CD8-positive, alpha-beta T cell (primary cell): ENCODE measurements at regions of chr4 and their contacts with region 1.

Region 1: DNA sequence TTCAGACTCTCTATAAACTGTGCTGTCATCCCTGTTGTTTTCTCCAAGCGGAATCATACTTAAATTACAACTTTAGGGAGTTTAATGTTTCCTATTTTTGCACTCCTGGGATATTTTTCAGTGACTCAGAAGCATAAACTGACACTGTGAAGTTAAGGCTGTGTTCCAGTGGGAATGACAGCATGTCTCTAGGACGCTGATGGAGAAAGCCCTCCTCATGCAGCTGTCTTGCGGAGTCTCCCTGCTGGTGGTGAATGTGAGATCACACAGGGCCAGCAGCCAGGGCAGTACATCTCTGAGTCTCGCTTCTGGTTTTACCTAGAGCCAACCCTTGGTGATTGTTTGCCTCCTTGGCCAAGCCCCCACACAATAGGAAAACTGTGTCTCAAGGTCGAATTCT is 53.3 kb downstream of the NFKB1 start:
- DNase-seq: no peak
- ATAC-seq: no peak
- H3K4me3 ChIP-seq: no peak overlapping the region
- H3K4me3 Mint-ChIP-seq: no peak overlapping the region
- H3K27ac ChIP-seq: no peak overlapping the region
- H3K27ac Mint-ChIP-seq: no peak overlapping the region
- H3K4me1 ChIP-seq: peaks cover 68% of the 10 kb centered on the region
- H3K4me1 Mint-ChIP-seq: peaks cover 61% of the 10 kb centered on the region
- H3K27me3 ChIP-seq: no peaks in the 10 kb centered on the region
- H3K27me3 Mint-ChIP-seq: no peaks in the 10 kb centered on the region
- CTCF ChIP-seq: no peak

Region 2: DNA sequence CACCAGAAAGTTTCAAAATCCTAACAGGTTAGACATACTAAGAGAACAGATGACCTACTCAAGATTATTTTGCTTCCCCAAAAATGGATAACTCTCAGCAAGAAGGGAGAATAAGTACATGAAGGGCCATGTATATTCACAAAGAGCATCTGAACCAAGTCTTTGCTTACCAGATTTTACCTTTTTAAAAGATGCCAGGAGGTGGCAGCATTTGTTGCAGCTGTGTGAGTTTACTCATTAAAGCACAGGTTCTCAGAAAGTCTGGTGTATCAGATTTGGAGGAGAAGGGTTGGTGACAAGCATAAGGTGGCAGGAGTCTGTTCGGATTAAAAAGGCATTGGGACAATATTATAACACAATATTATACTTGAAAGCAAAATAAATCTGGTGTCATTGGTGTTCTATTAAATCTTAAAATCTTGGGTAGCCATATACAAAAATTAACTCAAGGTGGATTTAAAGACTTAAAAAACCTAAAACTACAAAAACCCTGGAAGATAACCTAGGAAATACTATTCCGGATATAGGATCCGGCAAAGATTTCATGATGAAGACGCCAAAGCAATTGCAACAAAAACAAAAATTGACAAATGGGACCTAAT is 104.6 kb before region 1 on chr4:
- CTCF ChIA-PET with region 1: no interaction called
- POLR2A ChIA-PET with region 1: no interaction called
- intact Hi-C with region 1: loop called in 1 of 2 experiments (anchors 5 kb)
- DNase-seq: peak; percentile 21 to 82 (median 48)
- ATAC-seq: peak; percentile 89
- H3K4me3 ChIP-seq: no peak overlapping the region
- H3K4me3 Mint-ChIP-seq: no peak overlapping the region
- H3K27ac ChIP-seq: no peak overlapping the region
- H3K27ac Mint-ChIP-seq: no peak overlapping the region
- H3K4me1 ChIP-seq: no peaks in the 10 kb centered on the region
- H3K4me1 Mint-ChIP-seq: peaks cover 10% of the 10 kb centered on the region
- H3K27me3 ChIP-seq: no peaks in the 10 kb centered on the region
- H3K27me3 Mint-ChIP-seq: no peaks in the 10 kb centered on the region
- CTCF ChIP-seq: peak; percentile 83

Region 3: DNA sequence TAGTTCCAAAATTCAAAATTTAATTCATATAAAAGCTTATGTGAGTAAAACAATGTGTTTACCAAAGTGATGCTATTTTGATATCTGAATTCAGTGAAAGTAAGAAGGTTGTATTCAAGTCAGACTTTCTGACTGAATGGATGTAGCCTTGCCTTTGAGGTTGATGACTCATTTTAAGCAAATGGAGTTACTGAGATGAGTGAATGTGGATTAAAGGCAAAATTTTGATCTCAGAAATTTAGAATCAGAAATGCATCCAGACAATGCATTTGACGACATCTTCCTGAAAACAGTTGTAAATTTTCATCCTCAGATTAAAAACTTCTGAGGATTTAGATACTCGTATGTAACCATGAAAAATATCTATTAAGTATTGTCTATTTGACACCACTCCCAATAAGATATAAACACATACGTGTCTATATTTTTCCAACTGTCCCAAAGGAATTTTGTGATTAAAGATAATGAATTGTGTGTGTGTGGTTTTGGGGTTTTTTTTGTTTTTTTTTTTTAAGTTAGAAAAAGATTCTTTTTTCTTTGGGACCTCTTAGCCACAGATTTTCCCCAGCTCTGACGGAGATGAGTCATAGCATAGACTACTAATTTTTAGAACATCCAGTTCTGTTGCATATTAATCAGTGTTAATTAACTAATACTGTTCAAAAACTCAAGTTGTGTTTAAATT is 18.9 kb before region 1 on chr4:
- CTCF ChIA-PET with region 1: no interaction called
- POLR2A ChIA-PET with region 1: no interaction called
- intact Hi-C with region 1: loop called in 1 of 2 experiments (anchors 2 kb)
- DNase-seq: peak in 1 of 9 experiments; percentile 55
- ATAC-seq: peak; percentile 77
- H3K4me3 ChIP-seq: no peak overlapping the region
- H3K4me3 Mint-ChIP-seq: no peak overlapping the region
- H3K27ac ChIP-seq: no peak overlapping the region
- H3K27ac Mint-ChIP-seq: no peak overlapping the region
- H3K4me1 ChIP-seq: peaks cover 42% of the 10 kb centered on the region
- H3K4me1 Mint-ChIP-seq: peaks cover 55% of the 10 kb centered on the region
- H3K27me3 ChIP-seq: no peaks in the 10 kb centered on the region
- H3K27me3 Mint-ChIP-seq: no peaks in the 10 kb centered on the region
- CTCF ChIP-seq: no peak

Region 4: GRCh38 chr4:102543030-102543928 is 11.2 kb before region 1 on chr4:
- CTCF ChIA-PET with region 1: interaction called, 5 read pairs
- POLR2A ChIA-PET with region 1: interaction called, 4 read pairs
- intact Hi-C with region 1: loop called in 1 of 2 experiments (anchors 1 kb)
- DNase-seq: no peak
- ATAC-seq: no peak
- H3K4me3 ChIP-seq: no peak overlapping the region
- H3K4me3 Mint-ChIP-seq: no peak overlapping the region
- H3K27ac ChIP-seq: no peak overlapping the region
- H3K27ac Mint-ChIP-seq: no peak overlapping the region
- H3K4me1 ChIP-seq: peaks cover 8% of the 10 kb centered on the region
- H3K4me1 Mint-ChIP-seq: peaks cover 43% of the 10 kb centered on the region
- H3K27me3 ChIP-seq: no peaks in the 10 kb centered on the region
- H3K27me3 Mint-ChIP-seq: no peaks in the 10 kb centered on the region
- CTCF ChIP-seq: no peak